ENCODE measurements at regions of chr16 and their contacts with region 1.

Region 1: DNA sequence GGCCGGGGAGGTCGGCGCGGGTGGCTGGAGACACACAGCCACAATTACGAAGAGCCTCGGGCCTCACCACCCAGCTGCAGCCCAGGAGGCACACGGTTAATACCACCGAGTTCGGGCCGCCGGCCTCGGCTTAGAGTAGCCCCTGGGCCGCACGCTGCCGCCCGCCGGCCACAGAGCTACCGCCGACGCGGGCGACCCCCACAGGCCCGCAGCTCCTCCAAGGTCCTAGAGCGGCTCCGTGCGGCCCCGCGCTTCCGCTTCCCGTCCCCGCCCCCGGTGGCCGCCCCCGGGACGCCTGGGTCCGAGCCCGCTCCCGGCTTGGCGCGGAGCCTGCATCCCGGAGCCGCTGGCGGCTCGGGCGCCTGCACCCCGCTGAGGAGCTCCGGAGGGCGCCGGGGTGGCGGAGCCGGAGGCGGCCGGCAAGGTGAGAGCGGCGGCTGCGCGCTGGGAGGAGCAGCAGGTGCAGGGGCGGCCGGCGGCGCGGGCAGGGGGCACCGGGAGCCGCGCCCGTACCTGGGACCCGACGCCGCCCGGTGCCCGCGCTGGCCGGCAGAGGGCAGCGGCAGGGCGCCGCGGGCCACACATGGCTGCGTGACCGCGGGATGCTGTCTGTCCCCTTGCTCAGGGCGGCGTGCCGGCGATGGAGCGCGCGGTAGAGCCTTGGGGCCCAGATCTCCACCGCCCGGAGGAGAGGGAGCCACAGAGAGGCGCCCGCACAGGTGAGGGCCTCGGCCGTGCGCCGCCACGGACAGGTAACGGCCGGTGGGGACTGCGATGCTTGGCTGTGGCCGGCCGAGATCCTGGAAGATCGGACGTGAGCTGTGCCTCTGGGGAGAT is at the start of gene ZNF48:
- DNase-seq: peak; percentile 59 to 88
- ATAC-seq: peak; percentile 82 to 88
- H3K4me3 ChIP-seq: peak within 1 kb of the TSS; percentile 86
- H3K27ac ChIP-seq: peak within 1 kb of the TSS; percentile 95 to 98
- H3K4me1 ChIP-seq: peaks cover 12% of the 10 kb centered on the region
- CTCF ChIP-seq: peak; percentile 65
- EP300 ChIP-seq: no peak
- POLR2A ChIP-seq: peak; percentile 52
- RAD21 ChIP-seq: peak; percentile 4 to 36; a peak in 2 of 5 replicates
- polyA plus RNA-seq, gene ZNF48: 7.0 and 9.3 TPM in 2 replicates

Region 2: DNA sequence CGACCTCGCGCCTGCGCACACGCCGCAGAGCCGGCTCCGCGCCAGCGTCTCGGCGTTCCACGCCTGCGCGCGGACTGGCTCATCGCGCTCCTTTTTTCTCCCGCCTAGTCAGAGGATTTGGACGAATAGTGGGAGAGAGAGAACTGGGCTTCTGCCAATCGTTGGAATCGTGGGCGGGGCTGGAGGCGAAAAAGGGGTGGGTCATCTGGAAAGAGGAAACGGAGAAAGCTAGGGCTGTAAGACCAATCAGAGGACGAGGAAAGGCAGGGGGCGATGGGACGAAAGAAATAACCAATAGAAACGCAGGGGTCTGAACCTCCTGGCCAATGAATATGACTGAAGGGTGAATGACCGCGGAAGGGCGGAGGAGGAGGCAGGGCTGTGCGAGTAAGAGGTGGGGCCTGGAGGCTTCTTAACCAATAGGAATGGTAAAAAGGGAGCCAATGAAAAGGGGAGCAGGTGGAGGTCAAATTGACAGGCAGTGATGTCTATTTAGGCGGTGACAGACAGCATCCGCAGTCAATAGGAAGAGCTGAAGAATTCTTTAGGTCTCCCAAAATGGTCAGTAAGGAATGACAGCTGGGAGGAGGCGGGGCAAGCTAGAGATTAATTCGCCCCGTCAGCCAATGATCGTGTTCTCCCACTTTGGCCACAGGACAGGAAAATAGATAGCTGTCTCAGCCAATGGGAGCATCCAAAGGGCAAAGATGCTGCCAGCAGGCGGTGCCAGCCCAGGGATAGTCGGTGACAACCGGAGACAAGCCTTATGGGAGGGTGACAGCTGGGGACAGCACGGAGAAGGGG is 24.7 kb before region 1 on chr16 and contains the start of gene TBC1D10B:
- CTCF ChIA-PET with region 1: interaction called, 8 read pairs
- POLR2A ChIA-PET with region 1: interaction called, 11 read pairs
- DNase-seq: peak; percentile 100
- ATAC-seq: peak; percentile 87 to 94
- H3K4me3 ChIP-seq: peak within 1 kb of the TSS; percentile 76
- H3K27ac ChIP-seq: peak within 1 kb of the TSS; percentile 96 to 98
- H3K4me1 ChIP-seq: peaks cover 20% of the 10 kb centered on the region
- CTCF ChIP-seq: no peak
- EP300 ChIP-seq: no peak
- POLR2A ChIP-seq: peak; percentile 31
- RAD21 ChIP-seq: no peak
- polyA plus RNA-seq, gene TBC1D10B: 10.9 and 12.6 TPM in 2 replicates

Region 3: DNA sequence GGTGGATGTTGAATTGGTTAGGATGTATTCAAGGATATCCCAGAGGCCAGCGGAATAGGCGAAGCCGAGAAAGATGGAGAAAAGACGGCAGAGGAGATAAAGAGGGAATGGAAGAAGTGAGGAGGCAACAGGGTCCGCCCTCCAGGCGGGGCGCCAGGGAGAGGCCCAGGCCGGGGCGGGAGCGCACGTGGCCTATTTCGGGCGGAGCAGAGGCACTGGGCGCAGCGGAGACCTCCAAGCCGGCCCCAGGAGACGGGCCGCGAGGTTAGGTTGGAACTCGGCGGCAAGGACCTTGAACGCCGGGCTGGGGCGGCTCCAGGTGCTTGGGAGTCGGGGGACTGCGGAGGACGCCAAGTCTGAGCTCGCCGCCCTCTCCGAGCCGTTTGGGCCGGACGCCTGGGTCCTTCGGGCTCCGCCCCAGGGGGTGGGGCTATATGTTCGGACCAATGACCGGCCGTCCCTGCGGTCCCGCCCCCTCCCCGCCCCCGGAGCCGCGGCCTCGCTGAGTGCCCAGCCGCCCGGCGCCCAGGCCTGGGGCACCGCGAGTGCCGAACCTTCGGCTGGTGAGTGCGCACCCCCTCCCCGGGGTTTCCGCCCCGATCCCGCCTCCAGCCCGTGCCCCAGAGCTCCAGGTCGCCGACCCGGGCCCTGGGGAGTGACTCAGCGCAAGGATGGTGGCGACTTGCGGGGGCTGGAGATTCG is 11.9 kb after region 1 on chr16 and contains the start of gene ZNF771:
- CTCF ChIA-PET with region 1: interaction called, 149 read pairs
- POLR2A ChIA-PET with region 1: interaction called, 13 read pairs
- DNase-seq: peak; percentile 83 to 90
- ATAC-seq: peak; percentile 88 to 92
- H3K4me3 ChIP-seq: peak within 1 kb of the TSS; percentile 62
- H3K27ac ChIP-seq: peak within 1 kb of the TSS; percentile 80 to 92
- H3K4me1 ChIP-seq: peaks cover 20% of the 10 kb centered on the region
- CTCF ChIP-seq: no peak
- EP300 ChIP-seq: no peak
- POLR2A ChIP-seq: peak; percentile 69
- RAD21 ChIP-seq: no peak
- polyA plus RNA-seq, gene ZNF771: 5.0 and 5.7 TPM in 2 replicates

Region 4: DNA sequence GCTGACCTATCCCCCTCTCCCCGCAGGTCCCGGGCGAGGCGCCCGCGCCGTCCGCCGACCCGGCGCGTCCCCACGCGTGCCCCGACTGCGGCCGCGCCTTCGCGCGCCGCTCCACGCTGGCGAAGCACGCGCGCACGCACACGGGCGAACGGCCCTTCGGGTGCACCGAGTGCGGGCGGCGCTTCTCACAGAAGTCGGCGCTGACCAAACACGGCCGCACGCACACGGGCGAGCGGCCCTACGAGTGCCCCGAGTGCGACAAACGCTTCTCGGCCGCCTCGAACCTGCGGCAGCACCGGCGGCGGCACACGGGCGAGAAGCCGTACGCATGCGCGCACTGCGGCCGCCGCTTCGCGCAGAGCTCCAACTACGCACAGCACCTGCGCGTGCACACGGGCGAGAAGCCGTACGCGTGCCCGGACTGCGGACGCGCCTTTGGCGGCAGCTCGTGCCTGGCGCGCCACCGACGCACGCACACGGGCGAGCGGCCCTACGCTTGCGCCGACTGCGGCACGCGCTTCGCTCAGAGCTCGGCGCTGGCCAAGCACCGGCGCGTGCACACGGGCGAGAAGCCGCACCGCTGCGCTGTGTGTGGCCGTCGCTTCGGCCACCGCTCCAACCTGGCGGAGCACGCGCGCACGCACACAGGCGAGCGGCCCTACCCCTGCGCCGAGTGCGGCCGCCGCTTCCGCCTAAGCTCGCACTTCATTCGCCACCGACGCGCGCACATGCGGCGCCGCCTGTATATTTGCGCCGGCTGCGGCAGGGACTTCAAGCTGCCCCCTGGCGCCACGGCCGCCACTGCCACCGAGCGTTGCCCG is 22.4 kb after region 1 on chr16:
- CTCF ChIA-PET with region 1: interaction called, 149 read pairs
- POLR2A ChIA-PET with region 1: interaction called, 4 read pairs
- DNase-seq: peak; percentile 80 to 98
- ATAC-seq: peak; percentile 90 to 94
- H3K4me3 ChIP-seq: peak overlapping the region; percentile 66
- H3K27ac ChIP-seq: peak overlapping the region; percentile 89 to 91
- H3K4me1 ChIP-seq: peaks cover 20% of the 10 kb centered on the region; the same call in 2 of the 3 replicates
- CTCF ChIP-seq: peak; percentile 34; the same call in 1 of the 3 replicates
- EP300 ChIP-seq: no peak
- POLR2A ChIP-seq: peak; percentile 26
- RAD21 ChIP-seq: peak; percentile 8 to 26; a peak in 2 of 5 replicates

Region 5: GRCh38 chr16:30445408-30446202 is 50.2 kb after region 1 on chr16 and contains the start of gene SEPHS2:
- CTCF ChIA-PET with region 1: no interaction called
- POLR2A ChIA-PET with region 1: no interaction called
- DNase-seq: peak; percentile 92 to 98
- ATAC-seq: peak; percentile 94 to 95
- H3K4me3 ChIP-seq: peak within 1 kb of the TSS; percentile 84
- H3K27ac ChIP-seq: peak within 1 kb of the TSS; percentile 91 to 99
- H3K4me1 ChIP-seq: peaks cover 19% of the 10 kb centered on the region
- CTCF ChIP-seq: peak; percentile 40
- EP300 ChIP-seq: no peak
- POLR2A ChIP-seq: peak; percentile 79
- RAD21 ChIP-seq: peak in 1 of 2 experiments; percentile 18; a peak in 1 of 5 replicates
- polyA plus RNA-seq, gene SEPHS2: 61.5 and 72.6 TPM in 2 replicates